Activated CD4-positive, alpha-beta memory T cell treated with anti-CD3 and anti-CD28 coated beads, Interleukin-2, amount 10 ng/mL, durations not matched to agents 7 days and 5 days (primary cell): ENCODE measurements at regions of chr17 and their contacts with region 1.

Region 1: DNA sequence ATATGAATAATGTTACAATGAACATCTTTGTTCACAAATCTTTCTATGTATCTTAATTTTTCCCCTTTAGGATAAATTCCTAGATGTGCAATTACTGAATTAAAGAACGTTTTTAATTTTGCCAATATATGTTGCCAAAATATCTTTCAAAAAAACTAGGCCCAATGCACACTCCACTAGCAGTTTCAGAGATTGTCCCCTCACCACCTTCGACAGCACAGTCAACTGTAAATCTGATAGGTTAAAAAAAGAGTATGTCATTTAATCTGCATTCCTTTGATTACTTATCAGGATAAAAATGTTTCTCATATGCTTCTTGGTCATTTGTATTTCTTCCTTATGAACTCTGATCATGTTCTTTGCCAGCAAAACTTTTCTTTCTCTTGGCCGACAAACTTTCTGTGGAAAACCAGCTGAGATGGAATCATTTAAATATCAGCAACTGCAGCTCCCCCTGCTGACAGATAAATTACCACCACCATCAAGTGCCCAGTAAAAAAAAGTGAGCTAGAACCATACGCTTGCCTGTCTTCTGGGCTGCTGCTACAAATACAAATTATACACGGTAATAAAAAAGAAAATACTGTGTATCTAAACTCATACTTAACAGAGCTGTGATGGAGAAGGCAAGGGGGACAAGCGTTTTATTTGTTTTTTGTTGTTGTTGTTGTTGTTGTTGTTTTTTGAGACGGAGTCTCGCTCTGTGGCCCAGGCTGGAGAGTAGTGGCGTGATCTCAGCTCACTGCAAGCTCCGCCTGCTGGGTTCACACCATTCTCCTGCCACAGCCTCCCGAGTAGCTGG is 19.6 kb upstream of the KANSL1 start:
- DNase-seq: peak; percentile 65
- H3K4me3 Mint-ChIP-seq: no peak overlapping the region
- H3K27ac Mint-ChIP-seq: no peak overlapping the region
- H3K4me1 Mint-ChIP-seq: peaks cover 19% of the 10 kb centered on the region
- H3K27me3 Mint-ChIP-seq: no peaks in the 10 kb centered on the region

Region 2: DNA sequence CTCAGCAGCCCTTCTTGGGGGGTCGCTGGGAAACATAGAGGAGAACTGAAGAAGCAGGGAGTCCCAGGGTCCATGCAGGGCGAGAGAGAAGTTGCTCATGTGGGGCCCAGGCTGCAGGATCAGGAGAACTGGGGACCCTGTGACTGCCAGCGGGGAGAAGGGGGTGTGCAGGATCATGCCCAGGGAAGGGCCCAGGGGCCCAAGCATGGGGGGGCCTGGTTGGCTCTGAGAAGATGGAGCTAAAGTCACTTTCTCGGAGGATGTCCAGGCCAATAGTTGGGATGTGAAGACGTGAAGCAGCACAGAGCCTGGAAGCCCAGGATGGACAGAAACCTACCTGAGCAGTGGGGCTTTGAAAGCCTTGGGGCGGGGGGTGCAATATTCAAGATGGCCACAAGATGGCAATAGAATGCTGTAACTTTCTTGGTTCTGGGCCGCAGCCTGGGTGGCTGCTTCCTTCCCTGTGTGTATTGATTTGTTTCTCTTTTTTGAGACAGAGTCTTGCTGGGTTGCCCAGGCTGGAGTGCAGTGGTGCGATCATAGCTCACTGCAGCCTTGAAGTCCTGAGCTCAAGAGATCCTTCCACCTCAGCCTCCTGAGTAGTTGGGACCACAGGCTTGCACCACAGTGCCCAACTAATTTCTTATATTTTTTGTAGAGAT is 210.4 kb before region 1 on chr17:
- CTCF ChIA-PET with region 1: interaction called, 38 read pairs
- POLR2A ChIA-PET with region 1: no interaction called
- DNase-seq: peak; percentile 80
- H3K4me3 Mint-ChIP-seq: no peak overlapping the region
- H3K27ac Mint-ChIP-seq: no peak overlapping the region
- H3K4me1 Mint-ChIP-seq: peaks cover 2% of the 10 kb centered on the region
- H3K27me3 Mint-ChIP-seq: peaks cover 5% of the 10 kb centered on the region

Region 3: DNA sequence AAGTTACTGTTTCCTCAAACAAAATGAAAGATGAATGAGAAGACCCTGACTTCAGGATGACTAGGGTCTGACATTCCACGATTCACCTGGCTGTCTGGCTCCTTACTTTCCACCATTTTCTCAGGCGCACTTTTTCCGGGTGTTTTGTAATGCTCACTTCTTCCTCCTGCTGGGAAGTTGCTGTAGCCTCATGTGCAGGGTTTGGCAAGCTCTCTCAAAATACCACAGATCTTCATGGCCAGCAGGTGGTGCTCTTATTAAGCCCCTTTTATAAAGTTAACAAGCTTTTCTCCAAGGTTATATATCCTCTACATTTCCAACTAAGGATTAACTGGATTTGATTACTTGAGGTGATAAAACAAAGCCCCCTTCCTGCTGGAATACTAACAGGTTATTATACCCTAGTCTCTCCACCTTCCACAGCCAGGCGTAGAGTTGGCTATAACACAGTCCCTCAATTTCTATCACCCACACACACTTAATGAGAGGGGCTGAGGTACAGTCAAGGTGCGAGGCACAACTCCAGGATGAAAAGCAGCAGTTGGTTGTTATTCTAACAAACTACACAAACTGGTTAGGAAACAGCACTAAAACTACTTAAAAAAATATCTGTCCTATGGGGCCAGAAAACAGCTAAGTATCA is 168.4 kb before region 1 on chr17:
- CTCF ChIA-PET with region 1: interaction called, 35 read pairs
- POLR2A ChIA-PET with region 1: no interaction called
- DNase-seq: peak; percentile 61
- H3K4me3 Mint-ChIP-seq: no peak overlapping the region
- H3K27ac Mint-ChIP-seq: no peak overlapping the region
- H3K4me1 Mint-ChIP-seq: peaks cover 2% of the 10 kb centered on the region
- H3K27me3 Mint-ChIP-seq: no peaks in the 10 kb centered on the region

Region 4: DNA sequence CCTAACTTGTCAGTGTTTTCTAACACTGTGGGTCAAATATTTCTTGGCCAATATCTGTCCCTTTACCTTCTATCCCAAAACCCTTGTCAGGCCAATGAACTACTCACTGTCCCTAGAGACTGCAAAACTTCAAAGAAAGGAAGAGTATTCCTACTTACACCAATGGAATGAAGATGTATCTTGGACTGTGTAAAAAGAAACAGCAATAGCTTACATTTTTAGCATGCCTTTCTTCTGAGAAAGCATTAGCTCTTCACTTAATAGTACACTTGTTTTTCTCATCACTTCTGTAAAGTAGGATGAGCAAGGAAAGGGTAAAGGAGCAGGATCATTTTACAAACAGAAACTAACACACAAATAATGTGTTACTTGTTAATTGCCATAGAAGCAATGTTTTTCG is 139.8 kb before region 1 on chr17:
- CTCF ChIA-PET with region 1: no interaction called
- POLR2A ChIA-PET with region 1: no interaction called
- DNase-seq: no peak
- H3K4me3 Mint-ChIP-seq: no peak overlapping the region
- H3K27ac Mint-ChIP-seq: no peak overlapping the region
- H3K4me1 Mint-ChIP-seq: peaks cover 1% of the 10 kb centered on the region
- H3K27me3 Mint-ChIP-seq: no peaks in the 10 kb centered on the region

Region 5: DNA sequence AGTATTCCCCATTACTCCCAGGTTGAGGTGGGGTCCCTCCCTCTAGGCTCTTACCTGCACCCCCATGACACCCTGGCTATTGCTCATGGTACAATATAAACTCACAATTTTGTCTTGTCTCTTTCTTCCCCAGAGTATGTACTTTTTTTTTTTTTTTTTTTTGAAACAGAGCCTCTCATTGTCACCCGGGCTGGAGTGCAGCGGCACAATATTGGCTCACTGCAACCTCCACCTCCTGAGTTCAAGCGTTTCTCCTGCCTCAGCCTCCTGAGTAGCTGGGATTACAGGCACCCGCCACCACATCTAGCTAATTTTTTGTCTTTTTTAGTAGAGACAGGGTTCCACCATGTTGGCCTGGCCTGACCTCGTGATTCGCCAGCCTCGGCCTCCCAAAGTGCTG is 28.1 kb before region 1 on chr17:
- CTCF ChIA-PET with region 1: interaction called, 25 read pairs
- POLR2A ChIA-PET with region 1: interaction called, 6 read pairs
- DNase-seq: no peak
- H3K4me3 Mint-ChIP-seq: no peak overlapping the region
- H3K27ac Mint-ChIP-seq: no peak overlapping the region
- H3K4me1 Mint-ChIP-seq: peaks cover 79% of the 10 kb centered on the region
- H3K27me3 Mint-ChIP-seq: no peaks in the 10 kb centered on the region

Region 6: DNA sequence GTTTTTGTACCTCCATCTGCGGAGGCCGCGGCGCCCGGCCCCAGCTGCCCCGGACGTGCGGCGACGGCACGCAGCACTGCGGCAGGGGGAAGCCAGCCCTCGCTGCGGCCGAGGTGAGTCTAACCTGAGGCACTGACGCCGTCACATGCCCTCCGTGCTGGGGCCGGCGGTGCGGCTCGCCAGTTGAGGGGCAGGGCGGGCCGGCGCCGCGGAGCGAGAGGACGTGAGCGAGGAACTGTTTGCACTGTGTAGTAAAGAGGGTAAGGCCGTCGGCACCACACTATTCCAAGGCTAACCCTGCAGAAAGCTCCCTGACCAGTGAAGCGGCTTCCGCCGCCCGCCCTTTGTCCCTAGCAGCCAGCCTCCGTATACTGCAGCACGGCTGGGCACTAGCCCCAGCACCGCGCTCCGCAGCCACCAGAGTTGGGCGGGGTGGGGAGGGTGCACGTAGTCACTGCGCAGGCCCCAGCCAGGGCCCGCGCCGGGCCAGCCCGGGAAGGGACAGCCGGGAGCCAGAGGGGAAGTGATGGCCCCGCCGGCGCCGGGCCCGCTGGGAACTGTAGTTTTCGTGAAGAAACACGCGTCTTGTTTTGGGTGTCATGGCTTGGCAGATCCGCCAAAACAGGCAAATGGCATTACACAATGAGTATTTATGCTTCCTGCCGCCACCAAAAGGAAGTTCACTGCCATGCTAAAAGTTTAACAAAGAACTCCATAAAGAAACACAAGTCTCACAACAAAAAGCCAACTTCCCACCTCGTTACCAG is 19.0 kb before region 1 on chr17:
- CTCF ChIA-PET with region 1: interaction called, 29 read pairs
- POLR2A ChIA-PET with region 1: interaction called, 31 read pairs
- DNase-seq: peak; percentile 96
- H3K4me3 Mint-ChIP-seq: peak overlapping the region; percentile 91
- H3K27ac Mint-ChIP-seq: peak overlapping the region; percentile 99
- H3K4me1 Mint-ChIP-seq: peaks cover 61% of the 10 kb centered on the region
- H3K27me3 Mint-ChIP-seq: no peaks in the 10 kb centered on the region

Region 7: GRCh38 chr17:46199379-46199778 is 13.5 kb before region 1 on chr17:
- CTCF ChIA-PET with region 1: interaction called, 29 read pairs
- POLR2A ChIA-PET with region 1: interaction called, 31 read pairs
- DNase-seq: no peak
- H3K4me3 Mint-ChIP-seq: no peak overlapping the region
- H3K27ac Mint-ChIP-seq: no peak overlapping the region
- H3K4me1 Mint-ChIP-seq: peaks cover 45% of the 10 kb centered on the region
- H3K27me3 Mint-ChIP-seq: no peaks in the 10 kb centered on the region